ENCODE measurements at regions of chr13 and their contacts with region 1.

Region 1: GRCh38 chr13:49240017-49240416 is 7.7 kb upstream of the CDADC1 start:
- DNase-seq: peak in 3 of 5 donors; percentile 11 to 55 (median 24)
- H3K4me3 ChIP-seq: no peak overlapping the region
- H3K4me3 Mint-ChIP-seq: no peak overlapping the region
- H3K27ac ChIP-seq: no peak overlapping the region
- H3K27ac Mint-ChIP-seq: peak overlapping the region in 1 of 8 donors; percentile 14
- H3K4me1 ChIP-seq: no peaks in the 10 kb centered on the region
- H3K4me1 Mint-ChIP-seq: peaks cover 0 to 4% (median 0%) of the 10 kb centered on the region in 3 donors
- H3K27me3 ChIP-seq: no peaks in the 10 kb centered on the region
- H3K27me3 Mint-ChIP-seq: peaks cover 2 to 9% of the 10 kb centered on the region in 2 donors

Region 2: DNA sequence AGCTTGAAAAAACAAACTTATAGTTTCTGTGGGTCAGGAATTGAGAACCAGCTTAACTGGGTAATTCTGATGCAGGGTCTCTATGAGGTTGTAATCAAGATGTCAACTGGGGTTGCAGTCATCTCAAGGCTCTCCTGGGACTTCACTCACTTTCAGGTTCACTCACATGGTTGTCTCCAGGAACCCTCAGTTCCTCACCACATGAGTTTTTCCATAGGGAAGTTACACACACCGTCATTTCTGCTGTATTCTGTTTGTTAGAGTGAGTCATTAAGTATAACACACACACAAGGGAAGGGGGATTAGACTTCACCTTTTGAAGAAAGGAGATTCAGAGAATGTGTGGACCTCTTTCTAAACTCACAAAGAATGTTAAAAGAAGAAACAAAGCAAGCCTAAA is 54.8 kb before region 1 on chr13:
- CTCF ChIA-PET with region 1: no interaction called
- POLR2A ChIA-PET with region 1: no interaction called
- DNase-seq: no peak
- H3K4me3 ChIP-seq: no peak overlapping the region
- H3K4me3 Mint-ChIP-seq: no peak overlapping the region
- H3K27ac ChIP-seq: no peak overlapping the region
- H3K27ac Mint-ChIP-seq: peak overlapping the region in 5 of 8 donors; percentile 45 to 77 (median 67)
- H3K4me1 ChIP-seq: no peaks in the 10 kb centered on the region
- H3K4me1 Mint-ChIP-seq: no peaks in the 10 kb centered on the region
- H3K27me3 ChIP-seq: no peaks in the 10 kb centered on the region
- H3K27me3 Mint-ChIP-seq: no peaks in the 10 kb centered on the region

Region 3: GRCh38 chr13:49225223-49226090 is 14.6 kb before region 1 on chr13:
- CTCF ChIA-PET with region 1: interaction called, 11 read pairs
- POLR2A ChIA-PET with region 1: no interaction called
- DNase-seq: no peak
- H3K4me3 ChIP-seq: no peak overlapping the region
- H3K4me3 Mint-ChIP-seq: no peak overlapping the region
- H3K27ac ChIP-seq: no peak overlapping the region
- H3K27ac Mint-ChIP-seq: peak overlapping the region in 1 of 8 donors; percentile 63
- H3K4me1 ChIP-seq: no peaks in the 10 kb centered on the region
- H3K4me1 Mint-ChIP-seq: peaks cover 4 to 8% (median 5%) of the 10 kb centered on the region in 3 donors
- H3K27me3 ChIP-seq: peaks cover 11% of the 10 kb centered on the region
- H3K27me3 Mint-ChIP-seq: peaks cover 23 to 37% of the 10 kb centered on the region in 2 donors

Region 4: DNA sequence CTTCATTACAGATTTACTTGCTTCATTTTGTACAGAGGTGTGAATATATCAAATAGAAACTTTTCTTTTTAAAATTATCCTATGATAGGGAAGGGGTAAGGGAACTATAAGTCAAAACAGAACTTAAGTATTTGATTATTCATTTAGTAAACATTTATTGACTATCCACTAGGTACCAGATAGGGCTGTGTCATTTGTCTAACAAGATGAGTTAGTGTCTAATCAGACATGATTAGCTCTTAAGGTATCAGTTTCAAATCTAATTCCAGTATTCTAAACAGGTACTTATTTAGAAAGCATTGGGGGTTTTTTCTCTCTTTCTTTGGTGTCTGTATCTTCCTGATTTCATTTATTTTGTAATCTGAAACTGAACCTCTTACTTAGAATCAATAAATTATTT is 39.9 kb after region 1 on chr13:
- CTCF ChIA-PET with region 1: interaction called, 18 read pairs
- POLR2A ChIA-PET with region 1: no interaction called
- DNase-seq: no peak
- H3K4me3 ChIP-seq: no peak overlapping the region
- H3K4me3 Mint-ChIP-seq: no peak overlapping the region
- H3K27ac ChIP-seq: no peak overlapping the region
- H3K27ac Mint-ChIP-seq: peak overlapping the region in 1 of 8 donors; percentile 46
- H3K4me1 ChIP-seq: no peaks in the 10 kb centered on the region
- H3K4me1 Mint-ChIP-seq: no peaks in the 10 kb centered on the region
- H3K27me3 ChIP-seq: no peaks in the 10 kb centered on the region
- H3K27me3 Mint-ChIP-seq: no peaks in the 10 kb centered on the region

Region 5: DNA sequence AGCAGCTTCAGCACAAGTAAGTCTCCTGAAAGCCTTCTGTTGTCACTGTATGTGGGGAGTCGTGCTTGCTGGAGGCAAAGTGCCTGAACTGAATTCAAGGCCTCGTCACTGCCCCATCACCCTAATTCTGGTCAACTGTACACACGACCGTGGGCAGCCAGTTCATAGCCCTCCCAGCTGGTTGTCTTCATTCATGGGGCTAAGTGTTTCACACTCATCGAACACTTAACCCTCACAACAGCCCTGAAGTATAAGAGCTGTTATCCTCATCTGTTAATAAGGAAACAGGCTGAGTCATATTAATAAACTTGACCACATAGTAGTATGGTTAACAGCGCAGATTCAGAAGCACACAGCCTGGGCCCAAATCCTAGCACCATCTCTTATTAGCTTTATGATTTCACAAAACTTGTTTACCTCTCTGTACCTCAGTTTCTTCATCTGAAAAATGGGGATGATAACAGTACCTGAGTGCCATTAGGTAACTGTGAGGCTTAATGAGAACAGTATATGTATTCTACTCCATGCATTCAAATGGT is 74.4 kb after region 1 on chr13:
- CTCF ChIA-PET with region 1: no interaction called
- POLR2A ChIA-PET with region 1: no interaction called
- DNase-seq: no peak
- H3K4me3 ChIP-seq: no peak overlapping the region
- H3K4me3 Mint-ChIP-seq: no peak overlapping the region
- H3K27ac ChIP-seq: no peak overlapping the region
- H3K27ac Mint-ChIP-seq: peak overlapping the region in 1 of 8 donors; percentile 33
- H3K4me1 ChIP-seq: no peaks in the 10 kb centered on the region
- H3K4me1 Mint-ChIP-seq: no peaks in the 10 kb centered on the region
- H3K27me3 ChIP-seq: no peaks in the 10 kb centered on the region
- H3K27me3 Mint-ChIP-seq: peaks cover 0 to 3% of the 10 kb centered on the region in 2 donors